ENCODE measurements at regions of chr2 and their contacts with region 1.

Region 1: DNA sequence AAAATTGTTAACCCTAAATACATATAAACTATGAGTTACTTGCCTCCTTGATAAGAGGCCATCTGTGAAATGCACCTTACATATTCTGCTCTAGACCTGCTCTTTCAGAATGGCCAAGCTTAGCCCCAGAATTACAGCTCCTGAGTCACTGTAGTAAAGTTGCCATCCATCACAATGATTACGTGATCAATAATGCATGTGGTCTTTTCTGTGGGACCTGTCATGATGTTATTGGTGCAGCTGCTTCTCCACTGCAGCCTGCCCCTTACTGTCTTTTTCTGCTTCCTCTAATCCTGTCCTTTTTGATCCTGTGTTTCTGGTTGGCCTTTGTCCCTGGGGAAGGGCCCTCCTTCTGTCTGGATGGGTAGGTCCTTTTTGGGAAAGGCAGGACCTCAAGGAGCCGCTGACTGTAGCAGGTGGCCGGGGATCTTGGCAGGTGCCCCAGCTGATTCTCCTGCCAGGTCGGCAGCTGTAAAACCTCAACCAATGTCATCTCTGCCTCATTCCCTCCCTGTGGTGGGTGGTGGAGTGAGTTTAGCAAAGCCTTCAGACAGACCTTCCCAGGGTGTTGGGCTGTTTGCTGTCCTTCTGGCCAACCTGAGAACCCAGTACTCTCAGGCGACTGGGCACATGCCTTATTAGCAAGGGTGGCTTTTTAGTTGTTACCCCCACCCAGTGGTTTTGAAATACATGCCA is 126.2 kb upstream of the EML6 start:
- DNase-seq: peak; percentile 45
- H3K4me3 Mint-ChIP-seq: peak overlapping the region; percentile 58
- H3K27ac Mint-ChIP-seq: peak overlapping the region; percentile 95
- H3K4me1 Mint-ChIP-seq: peaks cover 93% of the 10 kb centered on the region
- H3K27me3 Mint-ChIP-seq: no peaks in the 10 kb centered on the region

Region 2: GRCh38 chr2:54570925-54571694 is 26.2 kb before region 1 on chr2:
- CTCF ChIA-PET with region 1: interaction called, 12 read pairs
- DNase-seq: peak; percentile 82
- H3K4me3 Mint-ChIP-seq: peak overlapping the region; percentile 71
- H3K27ac Mint-ChIP-seq: peak overlapping the region; percentile 94
- H3K4me1 Mint-ChIP-seq: peaks cover 93% of the 10 kb centered on the region
- H3K27me3 Mint-ChIP-seq: no peaks in the 10 kb centered on the region

Region 3: GRCh38 chr2:54708584-54709335 is 111.5 kb after region 1 on chr2:
- CTCF ChIA-PET with region 1: no interaction called
- DNase-seq: peak; percentile 25
- H3K4me3 Mint-ChIP-seq: peak overlapping the region; percentile 18
- H3K27ac Mint-ChIP-seq: no peak overlapping the region
- H3K4me1 Mint-ChIP-seq: peaks cover 13% of the 10 kb centered on the region
- H3K27me3 Mint-ChIP-seq: peaks cover 46% of the 10 kb centered on the region

Region 4: GRCh38 chr2:54741250-54741649 is 143.9 kb after region 1 on chr2:
- CTCF ChIA-PET with region 1: no interaction called
- DNase-seq: no peak
- H3K4me3 Mint-ChIP-seq: no peak overlapping the region
- H3K27ac Mint-ChIP-seq: no peak overlapping the region
- H3K4me1 Mint-ChIP-seq: no peaks in the 10 kb centered on the region
- H3K27me3 Mint-ChIP-seq: peaks cover 10% of the 10 kb centered on the region

Measured in activated naive CD4-positive, alpha-beta T cell treated with anti-CD3 and anti-CD28 coated beads, Interleukin-2, amount 10 ng/mL, durations not matched to agents 7 days and 5 days (primary cell).